ENCODE measurements at regions of chr1 and their contacts with region 1.

Region 1: GRCh38 chr1:222455188-222455879 is 92.6 kb downstream of the HHIPL2 start:
- DNase-seq: peak; percentile 55 to 90
- H3K4me3 ChIP-seq: peak overlapping the region; percentile 42; the same call in 1 of the 2 replicates
- H3K27ac ChIP-seq: peak overlapping the region; percentile 30; the same call in 1 of the 2 replicates
- H3K4me1 ChIP-seq: 0 out of 2 replicates have a peak, but pooled peaks cover 10% of the 10 kb centered on the region
- H3K27me3 ChIP-seq: no peaks in the 10 kb centered on the region
- CTCF ChIP-seq: peak; percentile 97

Region 2: GRCh38 chr1:221203224-221204054 is 1251.9 kb before region 1 on chr1:
- CTCF ChIA-PET with region 1: no interaction called
- POLR2A ChIA-PET with region 1: no interaction called
- intact Hi-C with region 1: loop called (anchors 2 kb)
- DNase-seq: peak; percentile 43 to 75
- H3K4me3 ChIP-seq: no peak overlapping the region
- H3K27ac ChIP-seq: no peak overlapping the region
- H3K4me1 ChIP-seq: no peaks in the 10 kb centered on the region
- H3K27me3 ChIP-seq: no peaks in the 10 kb centered on the region
- CTCF ChIP-seq: peak; percentile 90

Region 3: GRCh38 chr1:221435504-221435904 is 1019.8 kb before region 1 on chr1:
- CTCF ChIA-PET with region 1: interaction called, 3 read pairs
- POLR2A ChIA-PET with region 1: no interaction called
- intact Hi-C with region 1: loop called (anchors 1 kb)
- DNase-seq: peak in 1 of 2 experiments; percentile 45
- H3K4me3 ChIP-seq: no peak overlapping the region
- H3K27ac ChIP-seq: no peak overlapping the region
- H3K4me1 ChIP-seq: peaks cover 20% of the 10 kb centered on the region
- H3K27me3 ChIP-seq: no peaks in the 10 kb centered on the region
- CTCF ChIP-seq: peak; percentile 98

Region 4: GRCh38 chr1:221829327-221830015 is 625.9 kb before region 1 on chr1:
- CTCF ChIA-PET with region 1: no interaction called
- POLR2A ChIA-PET with region 1: no interaction called
- intact Hi-C with region 1: loop called (anchors 10 kb)
- DNase-seq: no peak
- H3K4me3 ChIP-seq: no peak overlapping the region
- H3K27ac ChIP-seq: no peak overlapping the region
- H3K4me1 ChIP-seq: peaks cover 36% of the 10 kb centered on the region
- H3K27me3 ChIP-seq: no peaks in the 10 kb centered on the region
- CTCF ChIP-seq: no peak

Region 5: GRCh38 chr1:222105393-222105737 is 350.0 kb before region 1 on chr1:
- CTCF ChIA-PET with region 1: no interaction called
- POLR2A ChIA-PET with region 1: no interaction called
- intact Hi-C with region 1: loop called (anchors 1 kb)
- DNase-seq: peak in 1 of 2 experiments; percentile 61
- H3K4me3 ChIP-seq: no peak overlapping the region
- H3K27ac ChIP-seq: no peak overlapping the region
- H3K4me1 ChIP-seq: peaks cover 6% of the 10 kb centered on the region; the same call in 1 of the 2 replicates
- H3K27me3 ChIP-seq: no peaks in the 10 kb centered on the region
- CTCF ChIP-seq: peak; percentile 33; the same call in 1 of the 2 replicates

Region 6: DNA sequence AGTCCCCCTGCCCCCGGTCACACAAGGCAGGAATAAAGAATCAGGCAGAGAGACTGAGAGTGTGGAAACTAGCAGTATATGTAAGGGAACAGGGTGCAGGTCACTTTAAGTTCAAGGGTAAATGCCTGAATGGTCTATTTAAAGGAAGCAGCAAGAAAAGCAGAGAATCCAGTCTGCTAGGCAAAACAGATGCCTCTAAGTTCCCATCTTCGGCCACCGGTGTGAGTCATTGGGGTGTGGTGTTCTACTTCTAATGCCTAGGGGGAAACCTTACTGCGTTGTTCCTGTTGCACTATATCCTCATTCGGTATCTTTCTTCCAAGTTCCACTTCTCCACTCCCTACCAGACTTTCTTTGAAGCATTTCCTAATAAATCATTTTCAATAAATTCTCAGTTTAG is 167.3 kb before region 1 on chr1:
- CTCF ChIA-PET with region 1: no interaction called
- POLR2A ChIA-PET with region 1: no interaction called
- intact Hi-C with region 1: loop called (anchors 1 kb)
- DNase-seq: peak; percentile 77 to 87
- H3K4me3 ChIP-seq: peak overlapping the region; percentile 3; the same call in 1 of the 2 replicates
- H3K27ac ChIP-seq: peak overlapping the region; percentile 67
- H3K4me1 ChIP-seq: peaks cover 39% of the 10 kb centered on the region
- H3K27me3 ChIP-seq: no peaks in the 10 kb centered on the region
- CTCF ChIP-seq: no peak

Region 7: GRCh38 chr1:222370081-222370912 is 85.0 kb before region 1 on chr1:
- CTCF ChIA-PET with region 1: no interaction called
- POLR2A ChIA-PET with region 1: no interaction called
- intact Hi-C with region 1: no loop called
- DNase-seq: no peak
- H3K4me3 ChIP-seq: no peak overlapping the region
- H3K27ac ChIP-seq: no peak overlapping the region
- H3K4me1 ChIP-seq: peaks cover 16% of the 10 kb centered on the region
- H3K27me3 ChIP-seq: 0 out of 2 replicates have a peak, but pooled peaks cover 5% of the 10 kb centered on the region
- CTCF ChIP-seq: no peak

Measured in PC-9 (cell line).